ENCODE measurements at regions of chr14 and their contacts with region 1.

Region 1: GRCh38 chr14:33839193-33840076 is 111.4 kb downstream of the EGLN3 start:
- DNase-seq: peak; percentile 47 to 73 (median 68)
- ATAC-seq: peak; percentile 74 to 84
- H3K4me3 ChIP-seq: no peak overlapping the region
- H3K27ac ChIP-seq: no peak overlapping the region
- H3K4me1 ChIP-seq: no peaks in the 10 kb centered on the region
- H3K27me3 ChIP-seq: no peaks in the 10 kb centered on the region

Region 2: DNA sequence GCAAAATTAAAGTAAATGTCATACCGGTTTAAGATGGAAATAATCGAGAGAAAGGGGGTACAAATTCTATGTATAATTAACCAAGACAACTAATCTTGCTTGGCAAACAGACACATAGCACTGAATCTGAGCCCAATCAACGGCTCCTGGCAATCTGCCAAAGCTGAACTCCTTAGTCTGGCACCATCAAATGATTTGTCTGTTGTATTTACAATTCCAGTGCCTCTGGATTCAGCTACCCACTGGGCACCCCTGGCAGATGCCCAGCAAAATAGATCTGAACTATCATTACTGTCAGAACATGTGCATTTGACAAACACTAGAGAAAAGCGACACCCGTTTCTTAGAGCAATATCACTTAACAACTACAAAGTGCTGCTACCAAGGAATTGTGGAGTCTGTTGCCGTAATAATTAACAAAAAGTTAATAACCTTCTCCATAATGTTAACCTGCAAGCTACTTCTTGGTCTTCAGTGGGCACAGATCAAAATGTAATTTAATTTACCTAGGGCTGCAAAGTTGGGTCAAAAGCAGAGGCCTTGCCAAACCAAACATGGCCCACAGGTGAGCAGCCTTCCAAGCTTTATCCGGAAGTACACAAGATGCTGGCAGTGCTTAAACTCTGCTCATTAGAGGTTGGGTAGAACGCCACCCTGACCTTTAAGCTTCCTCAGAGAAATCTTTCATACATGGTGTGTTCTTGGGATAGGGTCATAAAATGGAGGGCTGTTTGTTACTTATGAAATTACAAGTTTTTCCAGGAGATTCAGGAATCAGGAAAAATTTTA is 103.9 kb after region 1 on chr14:
- intact Hi-C with region 1: loop called in 2 of 4 experiments (anchors 10 kb)
- DNase-seq: peak in 1 of 3 donors; percentile 46
- ATAC-seq: no peak
- H3K4me3 ChIP-seq: no peak overlapping the region
- H3K27ac ChIP-seq: no peak overlapping the region
- H3K4me1 ChIP-seq: no peaks in the 10 kb centered on the region
- H3K27me3 ChIP-seq: no peaks in the 10 kb centered on the region

Region 3: GRCh38 chr14:34098045-34098984 is 258.9 kb after region 1 on chr14:
- intact Hi-C with region 1: loop called in 2 of 4 experiments (anchors 5 kb)
- DNase-seq: peak in 2 of 3 donors; percentile 62 to 63
- ATAC-seq: peak; percentile 40 to 57
- H3K4me3 ChIP-seq: no peak overlapping the region
- H3K27ac ChIP-seq: no peak overlapping the region
- H3K4me1 ChIP-seq: no peaks in the 10 kb centered on the region
- H3K27me3 ChIP-seq: no peaks in the 10 kb centered on the region

Region 4: DNA sequence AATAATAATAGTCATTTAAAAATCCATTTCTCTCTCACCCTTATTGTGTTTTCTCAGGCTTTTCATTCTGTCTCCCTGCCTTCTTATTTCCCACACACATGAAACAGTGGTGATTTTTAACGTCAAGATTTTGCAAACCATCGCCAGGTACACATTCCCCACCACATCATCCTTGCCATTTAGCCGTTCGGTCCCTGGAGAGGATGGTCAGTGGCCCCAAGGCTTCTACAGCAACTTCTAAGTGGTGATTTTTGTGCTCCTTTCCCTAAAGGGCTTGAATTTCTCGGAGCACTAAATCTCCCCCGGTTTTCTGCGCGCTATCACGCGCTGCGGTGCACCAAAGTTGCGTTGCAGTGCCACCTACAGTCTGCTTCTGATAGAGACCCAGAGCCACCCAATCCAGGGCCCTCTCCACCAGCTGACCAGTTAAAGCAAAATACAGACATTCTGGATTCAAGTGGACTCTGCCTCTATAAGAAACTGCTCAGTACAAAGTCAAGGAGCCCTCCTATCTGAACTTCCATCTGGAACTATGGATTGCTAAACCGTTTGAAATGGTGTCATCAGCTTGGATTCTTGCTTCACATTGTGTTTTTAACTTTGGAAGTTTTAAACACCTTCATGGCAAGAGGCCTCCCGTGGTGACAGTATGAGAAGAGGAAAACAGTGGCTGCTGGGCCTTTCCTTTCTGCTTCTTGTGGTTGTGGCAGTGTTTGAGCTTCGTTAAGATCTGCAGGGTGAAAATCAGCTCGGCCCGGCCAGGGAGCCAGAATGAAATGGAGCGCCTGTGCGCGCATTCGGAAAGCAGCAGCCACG is 388.6 kb after region 1 on chr14:
- intact Hi-C with region 1: loop called (anchors 2 to 10 kb)
- DNase-seq: peak; percentile 63 to 80 (median 80)
- ATAC-seq: peak; percentile 94 to 95
- H3K4me3 ChIP-seq: no peak overlapping the region
- H3K27ac ChIP-seq: no peak overlapping the region
- H3K4me1 ChIP-seq: peaks cover 2% of the 10 kb centered on the region
- H3K27me3 ChIP-seq: no peaks in the 10 kb centered on the region

Region 5: GRCh38 chr14:34300882-34301734 is 461.7 kb after region 1 on chr14:
- intact Hi-C with region 1: loop called in 2 of 4 experiments (anchors 5 to 10 kb)
- DNase-seq: no peak
- ATAC-seq: no peak
- H3K4me3 ChIP-seq: no peak overlapping the region
- H3K27ac ChIP-seq: no peak overlapping the region
- H3K4me1 ChIP-seq: no peaks in the 10 kb centered on the region
- H3K27me3 ChIP-seq: no peaks in the 10 kb centered on the region

Measured in right cardiac atrium (tissue), 5 donors.